ENCODE measurements at regions of chr9 and their contacts with region 1.

Region 1: DNA sequence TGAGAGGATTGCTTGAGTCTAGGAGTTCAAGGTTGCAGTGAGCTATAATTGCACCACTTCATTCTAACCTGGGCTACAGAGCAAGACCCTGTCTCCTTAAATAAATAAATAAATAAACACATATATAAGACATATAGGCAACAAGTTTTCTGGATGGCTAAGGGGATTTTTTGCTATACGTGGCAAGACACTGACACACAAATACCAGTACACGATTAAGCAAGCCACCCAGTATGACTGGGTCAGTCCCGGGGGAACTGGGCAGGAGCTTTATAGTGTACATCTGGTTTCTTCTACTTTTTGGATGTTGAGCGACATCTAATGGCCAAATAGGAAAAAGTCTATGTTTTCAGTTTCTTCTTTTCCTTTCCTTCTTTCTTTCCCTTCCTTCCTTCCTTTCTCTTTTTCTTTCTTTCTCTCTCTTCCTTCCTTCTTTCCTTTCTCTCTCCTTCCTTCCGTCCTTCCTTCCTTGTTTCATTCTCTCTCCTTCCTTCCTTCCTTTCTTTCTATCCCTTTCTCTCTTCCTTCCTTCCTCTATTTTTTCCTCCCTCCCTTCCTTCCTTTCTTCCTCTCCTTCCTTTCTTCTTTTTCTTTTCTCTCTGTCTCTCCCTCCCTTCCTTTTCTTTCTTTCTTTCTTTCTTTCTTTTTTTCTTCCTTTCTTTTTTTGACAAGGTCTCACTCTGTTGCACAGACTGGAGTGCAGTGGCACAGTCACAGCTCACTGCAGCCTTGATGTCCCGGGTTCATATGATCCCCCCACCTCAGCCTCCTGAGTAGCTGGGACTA is 47.0 kb upstream of the PLIN2 start:
- DNase-seq: peak; percentile 93
- H3K4me3 ChIP-seq: no peak overlapping the region
- CTCF ChIP-seq: peak; percentile 33

Region 2: DNA sequence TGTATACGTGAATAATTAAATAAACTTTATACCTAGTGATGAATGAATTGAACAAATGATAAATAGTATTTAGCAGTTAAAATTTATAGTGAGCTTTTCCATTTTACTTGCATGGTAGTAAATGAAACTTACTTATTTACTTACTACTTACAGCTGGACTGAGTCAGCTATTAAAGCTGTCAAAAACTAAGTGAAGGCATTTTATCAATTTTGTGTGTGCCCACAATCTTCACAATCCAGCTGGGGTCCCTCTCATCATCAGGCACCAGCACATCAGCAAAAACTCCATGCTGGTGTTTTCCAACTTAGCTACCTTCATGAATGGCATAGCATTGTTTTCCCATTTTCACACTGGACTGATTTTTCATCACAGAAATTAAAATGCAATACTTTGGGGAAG is 222.4 kb before region 1 on chr9:
- CTCF ChIA-PET with region 1: no interaction called
- POLR2A ChIA-PET with region 1: no interaction called
- DNase-seq: no peak
- H3K4me3 ChIP-seq: no peak overlapping the region
- CTCF ChIP-seq: no peak

Region 3: GRCh38 chr9:19028835-19029451 is 145.4 kb before region 1 on chr9:
- CTCF ChIA-PET with region 1: interaction called, 16 read pairs
- POLR2A ChIA-PET with region 1: no interaction called
- DNase-seq: peak; percentile 12
- H3K4me3 ChIP-seq: no peak overlapping the region
- CTCF ChIP-seq: peak; percentile 47

Region 4: DNA sequence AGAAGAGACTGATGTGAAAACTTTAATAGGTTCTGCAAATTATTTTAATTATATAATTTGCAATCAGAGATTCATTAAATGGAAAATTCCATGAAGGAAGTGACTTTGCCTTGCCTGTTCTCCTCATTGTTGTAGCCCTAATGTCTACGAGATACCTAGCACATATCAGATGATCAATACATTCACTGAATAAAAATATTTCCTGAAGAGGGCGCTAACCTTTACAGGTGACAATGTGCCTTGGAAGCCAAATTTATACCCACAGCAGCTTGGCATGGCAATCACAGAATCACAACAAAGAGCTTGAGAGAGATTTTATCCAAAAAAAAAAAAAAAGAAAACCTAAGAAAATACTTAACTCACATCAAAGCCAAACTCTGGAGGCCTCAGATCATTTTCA is 89.0 kb before region 1 on chr9:
- CTCF ChIA-PET with region 1: interaction called, 37 read pairs
- POLR2A ChIA-PET with region 1: no interaction called
- DNase-seq: no peak
- H3K4me3 ChIP-seq: no peak overlapping the region
- CTCF ChIP-seq: no peak

Region 5: GRCh38 chr9:19161257-19162025 is 12.9 kb before region 1 on chr9:
- CTCF ChIA-PET with region 1: interaction called, 25 read pairs
- POLR2A ChIA-PET with region 1: no interaction called
- DNase-seq: peak; percentile 96
- H3K4me3 ChIP-seq: no peak overlapping the region
- CTCF ChIP-seq: no peak

Region 6: DNA sequence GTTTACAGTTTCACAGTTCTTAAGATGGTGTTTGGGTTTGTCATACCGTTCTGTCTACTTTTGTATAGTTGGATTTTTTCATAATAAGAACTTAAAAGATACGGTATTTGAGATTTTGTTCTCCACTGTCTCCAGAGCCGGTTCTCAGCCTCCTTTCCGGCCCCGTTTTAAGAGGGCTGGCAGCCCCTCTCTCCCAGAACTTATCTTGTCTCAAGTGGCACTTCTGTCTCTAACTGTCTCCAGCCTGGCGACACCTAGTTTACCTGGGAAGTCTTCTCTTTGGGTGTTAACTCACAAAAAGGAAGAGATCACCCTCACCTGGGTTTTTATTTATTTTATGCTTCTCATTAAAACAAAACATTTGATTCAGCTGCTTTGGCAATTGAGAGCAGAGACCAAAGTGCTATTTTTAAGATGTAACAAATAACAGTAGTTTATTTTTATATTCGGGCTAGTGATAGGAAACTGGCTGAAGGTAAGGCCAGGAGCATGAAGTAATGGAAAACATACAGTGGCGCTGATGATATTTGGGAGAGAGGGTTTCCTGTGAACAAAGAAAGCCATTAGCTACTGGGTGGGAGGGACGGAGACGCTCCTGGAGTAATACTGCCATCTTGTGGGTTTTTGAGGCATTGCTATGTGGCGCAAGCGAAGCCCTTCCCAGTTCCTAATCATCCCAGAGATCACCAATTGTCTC is 282.8 kb after region 1 on chr9:
- CTCF ChIA-PET with region 1: interaction called, 10 read pairs
- POLR2A ChIA-PET with region 1: no interaction called
- DNase-seq: no peak
- H3K4me3 ChIP-seq: peak overlapping the region; percentile 16; the same call in 1 of the 2 replicates
- CTCF ChIP-seq: peak; percentile 85